HEK293 (cell line): ENCODE measurements at regions of chr2 and their contacts with region 1.

Region 1: DNA sequence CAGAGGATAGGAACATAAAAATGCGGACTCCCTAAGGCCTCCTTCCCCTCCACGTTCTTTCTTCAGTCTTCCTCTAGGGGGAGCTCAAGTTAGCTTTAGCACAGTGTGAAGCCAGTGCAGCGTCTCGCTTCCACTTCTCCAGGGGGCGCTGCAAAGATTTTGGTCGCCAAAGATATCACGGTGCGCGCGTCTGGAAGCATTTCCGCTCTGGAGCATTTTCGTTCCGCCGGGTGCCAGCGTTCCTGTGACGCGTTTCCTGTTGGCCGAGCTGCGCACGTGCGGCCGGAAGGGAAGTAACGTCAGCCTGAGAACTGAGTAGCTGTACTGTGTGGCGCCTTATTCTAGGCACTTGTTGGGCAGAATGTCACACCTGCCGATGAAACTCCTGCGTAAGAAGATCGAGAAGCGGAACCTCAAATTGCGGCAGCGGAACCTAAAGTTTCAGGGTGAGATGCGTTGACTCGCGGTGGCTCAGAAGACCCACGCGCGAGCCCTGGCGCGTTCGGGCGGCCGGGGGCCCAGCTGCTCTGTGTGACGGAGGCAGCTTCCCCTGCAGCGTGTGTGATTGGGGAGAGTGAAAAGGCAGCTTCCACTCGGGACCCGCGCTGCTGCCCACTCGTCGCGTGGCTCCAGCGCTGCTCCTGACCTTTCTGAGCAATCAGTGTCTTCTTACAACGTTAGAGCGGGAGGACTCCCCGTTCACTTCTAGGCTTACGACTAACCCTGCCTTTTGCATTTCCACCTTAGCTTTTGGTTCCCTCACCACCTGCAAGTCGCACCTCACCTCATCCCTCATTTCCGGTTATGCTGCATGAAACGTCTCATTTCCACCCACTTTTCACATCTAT is at the start of gene DDX18:
- H3K4me3 ChIP-seq: peak within 1 kb of the TSS; percentile 73
- H3K27ac ChIP-seq: peak within 1 kb of the TSS; percentile 20; the same call in 1 of the 2 replicates
- H3K4me1 ChIP-seq: peaks cover 4% of the 10 kb centered on the region; the same call in 1 of the 2 replicates
- CTCF ChIP-seq: peak; percentile 99

Region 2: GRCh38 chr2:117801826-117802225 is 12.8 kb before region 1 on chr2:
- CTCF ChIA-PET with region 1: interaction called, 20 read pairs
- POLR2A ChIA-PET with region 1: no interaction called
- H3K4me3 ChIP-seq: no peak overlapping the region
- H3K27ac ChIP-seq: no peak overlapping the region
- H3K4me1 ChIP-seq: no peaks in the 10 kb centered on the region
- CTCF ChIP-seq: no peak

Region 3: GRCh38 chr2:117828870-117829269 is 14.2 kb after region 1 on chr2:
- CTCF ChIA-PET with region 1: interaction called, 11 read pairs
- POLR2A ChIA-PET with region 1: interaction called, 3 read pairs
- H3K4me3 ChIP-seq: no peak overlapping the region
- H3K27ac ChIP-seq: no peak overlapping the region
- H3K4me1 ChIP-seq: no peaks in the 10 kb centered on the region
- CTCF ChIP-seq: no peak